Dendritic cell treated with granulocyte-macrophage colony-stimulating factor and Interleukin-4, amounts not matched to agents 40 ng/mL and 50 ng/mL, for 4 days (primary cell): ENCODE measurements at regions of chr11 and their contacts with region 1.

Region 1: DNA sequence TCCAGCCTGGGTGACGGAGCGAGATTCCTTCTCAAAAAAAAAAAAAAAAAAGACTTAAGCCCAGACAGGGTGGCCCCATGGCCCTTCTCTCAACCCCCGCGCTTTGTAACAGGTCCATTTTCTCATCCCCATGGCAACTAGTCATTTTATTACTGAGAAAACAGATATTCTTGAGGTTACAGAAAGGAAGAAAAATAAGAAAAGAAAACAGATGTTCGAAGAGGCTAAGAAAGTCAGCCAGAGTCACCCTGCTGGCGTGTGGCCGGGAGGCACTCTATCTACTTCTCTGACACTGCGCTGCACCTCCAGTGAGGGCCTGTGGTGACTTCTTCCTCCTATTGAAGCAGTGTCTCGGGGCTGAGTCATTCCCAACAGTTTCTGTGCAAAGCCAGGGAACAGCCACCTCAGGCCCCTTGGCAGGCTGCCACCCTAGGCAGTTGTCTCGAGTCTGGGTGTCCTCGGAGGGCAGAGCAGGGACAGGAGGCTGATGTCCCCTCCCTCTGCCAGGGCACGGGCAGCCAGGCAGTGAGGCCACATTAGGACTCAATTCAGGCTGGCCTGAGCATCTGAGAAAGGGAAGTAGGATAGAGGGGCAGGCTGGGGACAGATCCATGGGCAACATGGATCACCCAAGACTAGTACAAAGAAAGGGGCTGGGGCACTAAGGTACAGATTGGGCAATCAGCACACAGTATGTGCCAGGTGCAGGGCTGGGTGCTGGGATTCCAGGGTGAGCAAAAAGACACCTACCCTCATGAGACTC is 16.4 kb upstream of the SYVN1 start:
- H3K4me3 Mint-ChIP-seq: peak overlapping the region; percentile 60
- H3K27ac Mint-ChIP-seq: peak overlapping the region; percentile 93
- H3K4me1 Mint-ChIP-seq: peaks cover 40% of the 10 kb centered on the region
- H3K27me3 Mint-ChIP-seq: no peaks in the 10 kb centered on the region

Region 2: GRCh38 chr11:65134386-65135253 is 16.1 kb before region 1 on chr11 and contains the start of gene SYVN1:
- intact Hi-C with region 1: loop called (anchors 2 kb)
- H3K4me3 Mint-ChIP-seq: peak within 1 kb of the TSS; percentile 89
- H3K27ac Mint-ChIP-seq: peak within 1 kb of the TSS; percentile 99
- H3K4me1 Mint-ChIP-seq: peaks cover 32% of the 10 kb centered on the region
- H3K27me3 Mint-ChIP-seq: no peaks in the 10 kb centered on the region